ENCODE measurements at regions of chr7 and their contacts with region 1.

Region 1: DNA sequence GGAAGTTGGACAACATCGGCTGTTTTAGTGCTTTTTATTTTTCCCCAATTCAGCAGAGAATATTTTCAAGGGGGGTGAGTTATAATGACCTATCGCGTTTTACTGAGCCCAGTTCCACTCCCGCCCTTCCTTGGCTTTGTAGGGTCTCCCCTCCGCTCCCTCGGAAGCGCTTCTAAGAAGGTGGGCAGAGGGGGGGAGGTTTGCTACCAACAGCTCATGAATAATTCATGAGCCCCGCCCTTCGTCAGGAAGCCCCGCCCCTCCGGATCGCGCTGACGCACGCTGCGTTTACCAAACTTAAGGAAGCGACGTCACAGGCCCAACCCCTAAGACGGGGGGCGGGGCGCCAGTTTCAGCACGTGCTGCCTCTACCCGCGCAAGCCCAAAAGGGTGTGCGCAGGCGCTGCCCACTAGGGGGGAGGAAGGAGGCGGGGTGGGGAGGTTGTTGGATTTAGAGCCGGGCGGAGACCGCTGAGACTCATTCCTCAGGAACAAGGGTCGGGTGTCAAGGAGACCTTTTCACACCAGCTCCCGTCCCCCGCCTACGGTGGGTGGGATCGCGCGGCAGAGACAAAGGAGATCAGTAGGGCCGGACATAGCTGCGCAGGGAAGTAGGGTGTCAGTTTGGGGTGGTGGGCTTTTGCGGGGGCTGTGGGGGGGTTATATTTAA is 529 bp upstream of the MEPCE start:
- DNase-seq: peak; percentile 100
- ATAC-seq: peak; percentile 58
- H3K4me3 Mint-ChIP-seq: peak overlapping the region; percentile 98
- H3K27ac Mint-ChIP-seq: peak overlapping the region; percentile 100
- H3K4me1 Mint-ChIP-seq: peaks cover 45% of the 10 kb centered on the region
- H3K27me3 Mint-ChIP-seq: no peaks in the 10 kb centered on the region
- CTCF ChIP-seq: no peak

Region 2: DNA sequence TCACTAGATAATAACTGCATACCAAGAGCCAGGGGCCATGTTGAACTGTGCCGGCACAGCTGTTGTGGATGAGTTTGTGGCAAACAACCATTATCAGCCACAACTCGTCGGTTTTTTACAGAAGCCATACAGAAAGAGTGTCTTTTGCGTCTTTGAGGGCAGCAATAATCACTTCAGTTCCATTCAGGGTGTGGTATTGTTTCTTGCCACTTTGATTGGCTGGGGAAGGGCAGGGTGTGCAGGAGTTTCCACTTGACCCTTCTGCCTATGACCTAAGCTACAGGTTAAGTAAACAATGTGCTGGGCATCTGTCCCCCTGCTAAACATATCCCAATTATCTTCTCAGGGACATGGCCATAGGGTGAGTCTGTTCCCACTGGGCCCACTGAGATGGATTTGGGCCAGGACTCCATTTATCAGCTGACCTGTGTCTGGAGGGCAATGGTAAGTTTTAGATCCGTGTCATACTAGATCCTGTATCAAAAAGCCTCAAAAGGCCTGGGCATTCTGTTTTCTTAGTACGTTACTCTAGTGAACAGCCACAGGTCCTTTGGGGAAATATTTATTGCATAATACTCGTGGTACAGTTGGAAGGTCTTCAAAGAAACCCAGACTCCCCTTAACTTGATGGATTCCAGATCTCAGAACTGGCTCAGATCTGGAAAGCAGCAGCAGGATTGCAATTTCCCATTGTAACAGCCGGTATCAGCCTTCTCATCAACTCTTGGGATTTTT is 363.5 kb before region 1 on chr7:
- CTCF ChIA-PET with region 1: no interaction called
- POLR2A ChIA-PET with region 1: no interaction called
- intact Hi-C with region 1: no loop called
- DNase-seq: no peak
- ATAC-seq: no peak
- H3K4me3 Mint-ChIP-seq: no peak overlapping the region
- H3K27ac Mint-ChIP-seq: no peak overlapping the region
- H3K4me1 Mint-ChIP-seq: no peaks in the 10 kb centered on the region
- H3K27me3 Mint-ChIP-seq: no peaks in the 10 kb centered on the region
- CTCF ChIP-seq: no peak

Region 3: DNA sequence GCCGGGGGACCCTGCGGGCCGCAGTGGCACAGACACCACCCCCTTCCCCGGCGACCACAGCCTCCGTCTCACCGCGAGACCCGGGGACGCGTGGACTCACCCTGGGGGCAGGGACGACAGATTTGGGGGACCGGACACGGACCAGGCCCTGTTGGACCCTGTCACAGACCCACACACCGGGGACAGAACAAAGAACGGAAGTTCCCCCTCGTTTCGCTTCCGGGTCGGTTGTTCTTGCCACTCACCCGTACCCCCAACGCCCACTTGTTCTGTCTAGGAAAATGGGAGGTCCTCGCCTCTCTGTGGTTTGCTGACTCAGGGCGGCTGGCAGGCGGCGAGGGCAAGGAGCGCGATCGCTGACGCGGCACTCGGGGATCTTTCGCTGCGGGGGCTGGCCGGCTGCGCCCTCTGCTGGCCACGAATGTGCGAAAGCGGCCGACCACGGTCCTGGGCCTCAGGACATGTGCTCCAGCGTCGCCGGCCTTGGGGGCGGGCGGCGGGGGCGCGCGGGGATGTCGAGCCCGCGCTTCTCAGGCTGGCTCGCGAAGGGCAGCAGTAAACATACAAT is 347.5 kb before region 1 on chr7 and contains the start of gene ZNF3:
- CTCF ChIA-PET with region 1: no interaction called
- POLR2A ChIA-PET with region 1: interaction called, 19 read pairs
- intact Hi-C with region 1: loop called (anchors 1 kb)
- DNase-seq: peak; percentile 96
- ATAC-seq: peak; percentile 80
- H3K4me3 Mint-ChIP-seq: peak within 1 kb of the TSS; percentile 89
- H3K27ac Mint-ChIP-seq: peak within 1 kb of the TSS; percentile 91
- H3K4me1 Mint-ChIP-seq: peaks cover 34% of the 10 kb centered on the region
- H3K27me3 Mint-ChIP-seq: no peaks in the 10 kb centered on the region
- CTCF ChIP-seq: peak; percentile 58
- total RNA-seq, gene ZNF3: 33.9 and 39.6 TPM in 2 replicates

Region 4: DNA sequence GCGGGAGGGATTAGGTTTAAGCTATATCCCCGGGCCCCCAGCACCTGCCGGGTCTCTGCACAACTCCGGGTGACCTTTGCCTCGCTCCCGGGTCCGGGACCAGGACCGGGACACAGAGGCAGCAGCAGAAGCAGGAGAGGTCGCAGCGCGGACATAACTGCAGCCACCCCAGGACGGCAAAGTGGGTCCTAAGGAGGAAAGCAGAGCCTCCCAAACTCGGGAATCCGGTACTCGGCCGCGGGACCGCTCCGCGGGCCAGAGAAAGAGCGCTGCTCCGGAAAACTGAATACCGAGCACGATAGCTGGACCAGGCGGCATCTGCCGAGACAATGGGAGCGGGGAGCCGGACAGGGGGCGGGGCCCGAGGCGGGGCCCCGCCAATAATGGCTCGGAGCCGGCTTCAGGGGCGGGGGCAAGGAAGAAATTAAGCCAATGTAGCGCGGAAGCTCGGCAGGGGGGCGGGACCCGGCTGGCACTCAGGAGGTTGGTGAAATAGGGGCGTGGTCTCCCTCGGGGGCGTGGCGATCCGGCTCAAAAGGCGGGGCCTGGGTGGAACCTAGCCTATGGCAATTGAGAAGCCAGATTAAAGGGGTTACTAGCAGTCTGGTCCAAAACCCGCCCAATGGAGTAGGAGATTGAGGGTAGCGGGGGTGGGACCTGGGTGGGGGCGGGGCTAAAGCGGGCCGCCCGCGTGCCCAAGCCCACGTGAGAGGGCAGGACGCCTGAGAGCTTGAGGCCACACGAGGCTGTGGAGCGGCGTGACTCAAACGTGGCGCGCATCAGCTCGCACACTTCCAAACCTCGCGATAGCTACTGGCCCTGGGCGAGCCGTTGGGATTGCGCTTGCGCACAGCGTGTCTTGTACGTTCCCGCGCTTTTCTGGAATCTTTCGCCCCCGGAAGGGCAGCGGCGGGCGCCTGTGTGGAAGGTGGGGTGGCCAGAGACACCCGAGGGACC is 251.8 kb before region 1 on chr7 and contains the starts of genes GPC2 and STAG3:
- CTCF ChIA-PET with region 1: no interaction called
- POLR2A ChIA-PET with region 1: interaction called, 11 read pairs
- intact Hi-C with region 1: no loop called
- DNase-seq: peak; percentile 97
- ATAC-seq: peak; percentile 95
- H3K4me3 Mint-ChIP-seq: peak within 1 kb of the TSS; percentile 84
- H3K27ac Mint-ChIP-seq: peak within 1 kb of the TSS; percentile 68
- H3K4me1 Mint-ChIP-seq: peaks cover 21% of the 10 kb centered on the region
- H3K27me3 Mint-ChIP-seq: peaks cover 4% of the 10 kb centered on the region
- CTCF ChIP-seq: no peak
- total RNA-seq, gene GPC2: 5.0 and 5.1 TPM in 2 replicates
- total RNA-seq, gene STAG3: 41.3 and 42.4 TPM in 2 replicates

Region 5: DNA sequence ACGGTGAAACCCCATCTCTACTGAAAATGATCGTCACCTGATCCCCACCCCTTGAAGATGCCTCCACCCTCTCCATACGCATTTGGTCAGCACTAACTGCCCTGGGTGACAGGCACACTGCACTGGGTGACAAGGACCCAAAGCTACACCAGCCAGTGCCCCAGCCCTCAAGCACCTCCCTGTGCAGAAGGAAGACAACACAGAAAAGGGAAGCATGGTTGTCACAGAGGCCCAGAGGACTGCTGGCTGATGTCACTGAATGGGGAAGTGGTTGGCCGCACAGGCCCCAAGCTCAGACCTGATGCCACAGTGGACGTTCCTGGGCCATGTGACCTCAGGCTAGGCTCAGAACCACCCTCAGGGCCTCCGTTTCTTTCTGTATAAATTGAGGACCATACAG is 60.0 kb before region 1 on chr7:
- CTCF ChIA-PET with region 1: no interaction called
- POLR2A ChIA-PET with region 1: interaction called, 90 read pairs
- intact Hi-C with region 1: loop called (anchors 1 kb)
- DNase-seq: peak; percentile 69
- ATAC-seq: peak; percentile 80
- H3K4me3 Mint-ChIP-seq: peak overlapping the region; percentile 44
- H3K27ac Mint-ChIP-seq: peak overlapping the region; percentile 91
- H3K4me1 Mint-ChIP-seq: peaks cover 92% of the 10 kb centered on the region
- H3K27me3 Mint-ChIP-seq: no peaks in the 10 kb centered on the region
- CTCF ChIP-seq: no peak

Region 6: DNA sequence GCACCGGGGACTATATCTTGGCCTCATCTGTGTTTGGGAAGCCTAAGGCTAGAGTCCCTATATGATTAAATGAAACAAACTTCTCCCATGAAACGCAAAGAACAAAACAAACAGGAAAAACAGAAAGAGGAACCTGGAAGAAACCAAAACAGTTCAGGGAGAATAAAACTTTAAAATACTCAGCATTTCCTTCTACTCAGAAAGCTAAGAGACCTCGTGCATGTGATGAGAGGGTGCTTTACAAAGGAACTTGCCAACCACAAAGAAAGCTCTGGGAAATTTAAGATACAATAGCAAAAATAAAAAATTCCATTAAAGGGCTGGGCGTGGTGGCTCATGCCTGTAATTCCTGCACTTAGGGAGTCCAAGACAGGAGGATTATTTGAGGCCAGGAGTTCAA is 48.9 kb before region 1 on chr7:
- CTCF ChIA-PET with region 1: no interaction called
- POLR2A ChIA-PET with region 1: no interaction called
- intact Hi-C with region 1: no loop called
- DNase-seq: no peak
- ATAC-seq: no peak
- H3K4me3 Mint-ChIP-seq: no peak overlapping the region
- H3K27ac Mint-ChIP-seq: no peak overlapping the region
- H3K4me1 Mint-ChIP-seq: peaks cover 11% of the 10 kb centered on the region
- H3K27me3 Mint-ChIP-seq: no peaks in the 10 kb centered on the region
- CTCF ChIP-seq: no peak

Region 7: GRCh38 chr7:100444311-100445278 is 15.5 kb after region 1 on chr7:
- CTCF ChIA-PET with region 1: no interaction called
- POLR2A ChIA-PET with region 1: interaction called, 65 read pairs
- intact Hi-C with region 1: no loop called
- DNase-seq: no peak
- ATAC-seq: peak; percentile 60
- H3K4me3 Mint-ChIP-seq: no peak overlapping the region
- H3K27ac Mint-ChIP-seq: peak overlapping the region; percentile 53
- H3K4me1 Mint-ChIP-seq: peaks cover 18% of the 10 kb centered on the region
- H3K27me3 Mint-ChIP-seq: no peaks in the 10 kb centered on the region
- CTCF ChIP-seq: no peak

Region 8: DNA sequence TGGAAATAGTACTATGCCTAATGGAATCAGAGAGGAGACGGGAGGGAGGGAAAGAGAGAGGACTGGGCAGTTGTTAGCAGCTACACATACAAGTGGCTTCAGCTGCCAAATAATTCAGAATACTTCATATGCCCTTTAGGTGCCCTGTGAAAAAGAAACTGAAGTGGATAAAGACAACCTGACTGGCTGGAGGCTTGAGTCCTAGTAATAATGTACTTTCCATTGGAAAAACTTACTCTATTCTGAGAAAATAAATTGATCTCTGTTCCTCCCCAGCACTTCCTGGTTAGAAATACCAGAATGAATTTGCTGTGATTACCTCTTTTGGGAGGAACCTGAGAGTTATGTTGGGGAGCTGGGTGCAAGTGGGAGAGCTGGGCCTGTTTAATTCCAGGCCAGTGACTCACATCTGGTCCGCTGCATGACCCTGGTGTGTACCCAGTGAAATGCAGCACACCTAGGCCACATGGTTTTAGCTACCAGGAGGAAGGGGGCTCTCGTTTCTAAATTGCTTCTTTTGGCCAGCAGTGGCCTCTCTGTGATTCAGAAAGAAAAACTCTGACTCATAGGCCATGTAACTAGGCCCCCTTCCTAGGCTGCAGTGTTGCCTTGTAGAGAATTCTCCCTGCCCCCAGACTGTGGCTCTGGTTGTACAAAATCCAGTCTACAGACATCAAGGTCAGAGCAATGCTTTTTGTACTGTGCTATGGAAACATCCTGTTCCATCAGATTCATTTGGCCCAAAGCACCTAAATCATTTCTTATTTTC is 116.4 kb after region 1 on chr7:
- CTCF ChIA-PET with region 1: no interaction called
- POLR2A ChIA-PET with region 1: interaction called, 13 read pairs
- intact Hi-C with region 1: no loop called
- DNase-seq: no peak
- ATAC-seq: peak; percentile 59
- H3K4me3 Mint-ChIP-seq: peak overlapping the region; percentile 32
- H3K27ac Mint-ChIP-seq: peak overlapping the region; percentile 80
- H3K4me1 Mint-ChIP-seq: peaks cover 77% of the 10 kb centered on the region
- H3K27me3 Mint-ChIP-seq: no peaks in the 10 kb centered on the region
- CTCF ChIP-seq: no peak

Region 9: DNA sequence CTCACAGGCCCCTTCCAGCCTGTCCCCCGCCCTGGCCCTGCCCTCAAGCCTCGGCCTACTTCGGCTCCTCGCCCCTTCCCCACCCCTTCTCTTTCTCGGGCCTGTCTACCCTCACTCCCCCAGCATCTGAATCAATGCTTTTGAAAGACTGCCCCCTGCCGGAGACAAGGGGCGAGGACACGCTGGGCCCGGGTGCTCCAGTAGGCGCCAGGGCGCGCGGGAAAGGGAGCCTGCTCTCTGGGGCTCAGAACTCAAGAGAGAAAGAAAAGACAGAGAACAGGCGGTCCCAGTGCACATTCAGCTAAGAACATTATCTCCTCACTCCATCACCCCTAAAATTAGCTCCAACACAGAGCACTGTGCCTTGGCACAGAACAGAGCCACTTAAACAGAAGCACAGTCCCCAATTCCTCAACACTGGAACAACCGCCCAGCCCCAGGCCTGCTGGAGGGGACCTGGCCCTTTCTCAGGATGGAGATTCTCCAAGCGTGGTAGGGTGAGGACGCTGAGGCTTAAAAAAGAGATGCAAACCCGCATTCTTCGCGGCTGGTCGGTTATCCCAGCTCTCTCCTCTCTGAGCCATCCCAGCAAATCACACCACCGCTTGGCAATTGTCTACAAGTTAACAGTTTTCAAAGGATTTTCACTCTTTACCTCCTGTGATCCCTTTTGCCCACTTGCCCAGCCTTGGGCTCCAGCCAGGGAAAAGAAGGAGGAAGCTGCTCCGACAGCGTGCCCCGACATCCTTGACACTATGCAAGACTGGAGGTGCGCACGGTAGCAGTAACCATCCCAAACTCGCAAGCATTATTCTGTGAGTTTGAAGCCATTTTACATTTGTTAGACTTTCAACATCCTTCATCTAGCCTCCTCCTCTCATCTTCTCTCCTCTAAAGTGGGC is 262.8 kb after region 1 on chr7:
- CTCF ChIA-PET with region 1: no interaction called
- POLR2A ChIA-PET with region 1: interaction called, 10 read pairs
- intact Hi-C with region 1: no loop called
- DNase-seq: peak; percentile 67
- ATAC-seq: peak; percentile 63
- H3K4me3 Mint-ChIP-seq: peak overlapping the region; percentile 90
- H3K27ac Mint-ChIP-seq: peak overlapping the region; percentile 80
- H3K4me1 Mint-ChIP-seq: peaks cover 49% of the 10 kb centered on the region
- H3K27me3 Mint-ChIP-seq: no peaks in the 10 kb centered on the region
- CTCF ChIP-seq: peak; percentile 21